A549 (cell line): ENCODE measurements at regions of chr17 and their contacts with region 1.

Region 1: DNA sequence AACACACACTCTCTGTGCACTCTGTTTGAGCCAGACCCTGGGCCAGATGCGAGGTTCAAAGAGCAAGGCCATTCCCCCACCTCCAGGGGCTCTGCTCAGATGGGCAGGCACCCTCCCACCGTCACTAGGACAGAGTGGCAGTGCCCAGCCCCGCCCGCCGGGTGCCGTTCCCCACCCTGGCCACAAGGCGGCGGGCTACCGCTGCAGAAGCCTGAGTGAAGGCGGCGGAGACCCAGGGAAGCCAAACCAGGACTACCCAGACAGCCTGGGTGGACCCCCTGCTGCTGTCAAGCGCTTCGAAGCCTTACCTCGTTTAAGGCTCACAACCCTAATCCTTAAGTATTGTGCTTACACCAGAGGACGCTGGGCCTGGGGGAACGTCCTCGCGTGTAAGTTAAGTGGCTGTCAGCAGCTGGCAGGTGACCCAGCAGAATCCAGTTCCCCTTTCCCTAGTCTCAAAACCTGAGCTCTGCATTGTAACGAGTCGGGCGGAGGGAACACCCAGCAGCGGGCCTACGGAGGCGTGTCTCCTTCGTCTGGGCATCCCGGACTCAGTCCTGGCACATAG is 4.5 kb downstream of the ARHGAP27 start:
- DNase-seq: peak; percentile 83 to 94
- ATAC-seq: peak; percentile 17 to 66
- H3K4me3 ChIP-seq: no peak overlapping the region
- H3K27ac ChIP-seq: peak overlapping the region in 1 of 2 experiments; percentile 56; a peak in 2 of 6 replicates
- H3K4me1 ChIP-seq: peaks cover 38% of the 10 kb centered on the region
- CTCF ChIP-seq: peak; percentile 97
- EP300 ChIP-seq: no peak
- POLR2A ChIP-seq: no peak
- RAD21 ChIP-seq: peak; percentile 90 to 93

Region 2: GRCh38 chr17:45218895-45219661 is 209.1 kb before region 1 on chr17:
- CTCF ChIA-PET with region 1: interaction called, 124 read pairs
- POLR2A ChIA-PET with region 1: no interaction called
- DNase-seq: peak; percentile 85 to 87
- ATAC-seq: peak; percentile 61 to 82
- H3K4me3 ChIP-seq: no peak overlapping the region
- H3K27ac ChIP-seq: peak overlapping the region; percentile 97
- H3K4me1 ChIP-seq: peaks cover 37% of the 10 kb centered on the region
- CTCF ChIP-seq: peak; percentile 99
- EP300 ChIP-seq: no peak
- POLR2A ChIP-seq: no peak
- RAD21 ChIP-seq: peak; percentile 99 to 100

Region 3: GRCh38 chr17:45247429-45248131 is 180.6 kb before region 1 on chr17:
- CTCF ChIA-PET with region 1: interaction called, 10 read pairs
- POLR2A ChIA-PET with region 1: no interaction called
- DNase-seq: peak; percentile 99 to 100
- ATAC-seq: peak; percentile 79 to 91
- H3K4me3 ChIP-seq: peak overlapping the region; percentile 89
- H3K27ac ChIP-seq: peak overlapping the region; percentile 93 to 96
- H3K4me1 ChIP-seq: peaks cover 49% of the 10 kb centered on the region
- CTCF ChIP-seq: no peak
- EP300 ChIP-seq: peak; percentile 78 to 91; a peak in 3 of 5 replicates
- POLR2A ChIP-seq: peak; percentile 70
- RAD21 ChIP-seq: no peak; a peak in 1 of 5 replicates

Region 4: GRCh38 chr17:45284176-45285140 is 143.7 kb before region 1 on chr17:
- CTCF ChIA-PET with region 1: interaction called, 17 read pairs
- POLR2A ChIA-PET with region 1: no interaction called
- DNase-seq: peak in 1 of 2 experiments; percentile 65
- ATAC-seq: peak; percentile 41 to 60; a peak in 4 of 6 replicates
- H3K4me3 ChIP-seq: no peak overlapping the region
- H3K27ac ChIP-seq: peak overlapping the region; percentile 49 to 74; a peak in 5 of 6 replicates
- H3K4me1 ChIP-seq: peaks cover 28% of the 10 kb centered on the region
- CTCF ChIP-seq: peak; percentile 44
- EP300 ChIP-seq: no peak
- POLR2A ChIP-seq: no peak
- RAD21 ChIP-seq: peak; percentile 28 to 34; a peak in 3 of 5 replicates

Region 5: GRCh38 chr17:45394913-45395568 is 33.1 kb before region 1 on chr17:
- CTCF ChIA-PET with region 1: interaction called, 331 read pairs
- POLR2A ChIA-PET with region 1: interaction called, 6 read pairs
- DNase-seq: peak; percentile 88 to 95
- ATAC-seq: peak; percentile 68 to 83
- H3K4me3 ChIP-seq: no peak overlapping the region
- H3K27ac ChIP-seq: peak overlapping the region; percentile 23 to 73; a peak in 3 of 6 replicates
- H3K4me1 ChIP-seq: 0 out of 3 replicates have a peak, but pooled peaks cover 3% of the 10 kb centered on the region
- CTCF ChIP-seq: peak; percentile 97
- EP300 ChIP-seq: no peak
- POLR2A ChIP-seq: no peak
- RAD21 ChIP-seq: peak; percentile 89 to 90

Region 6: GRCh38 chr17:45440155-45440778 is 12.1 kb after region 1 on chr17:
- CTCF ChIA-PET with region 1: interaction called, 53 read pairs
- POLR2A ChIA-PET with region 1: no interaction called
- DNase-seq: peak in 1 of 2 experiments; percentile 59
- ATAC-seq: peak in 1 of 2 experiments; percentile 24; a peak in 3 of 6 replicates
- H3K4me3 ChIP-seq: no peak overlapping the region
- H3K27ac ChIP-seq: peak overlapping the region in 1 of 2 experiments; percentile 2; a peak in 2 of 6 replicates
- H3K4me1 ChIP-seq: peaks cover 23% of the 10 kb centered on the region
- CTCF ChIP-seq: no peak
- EP300 ChIP-seq: no peak
- POLR2A ChIP-seq: no peak
- RAD21 ChIP-seq: no peak